HCT116 (cell line): ENCODE measurements at regions of chr1 and their contacts with region 1.

Region 1: DNA sequence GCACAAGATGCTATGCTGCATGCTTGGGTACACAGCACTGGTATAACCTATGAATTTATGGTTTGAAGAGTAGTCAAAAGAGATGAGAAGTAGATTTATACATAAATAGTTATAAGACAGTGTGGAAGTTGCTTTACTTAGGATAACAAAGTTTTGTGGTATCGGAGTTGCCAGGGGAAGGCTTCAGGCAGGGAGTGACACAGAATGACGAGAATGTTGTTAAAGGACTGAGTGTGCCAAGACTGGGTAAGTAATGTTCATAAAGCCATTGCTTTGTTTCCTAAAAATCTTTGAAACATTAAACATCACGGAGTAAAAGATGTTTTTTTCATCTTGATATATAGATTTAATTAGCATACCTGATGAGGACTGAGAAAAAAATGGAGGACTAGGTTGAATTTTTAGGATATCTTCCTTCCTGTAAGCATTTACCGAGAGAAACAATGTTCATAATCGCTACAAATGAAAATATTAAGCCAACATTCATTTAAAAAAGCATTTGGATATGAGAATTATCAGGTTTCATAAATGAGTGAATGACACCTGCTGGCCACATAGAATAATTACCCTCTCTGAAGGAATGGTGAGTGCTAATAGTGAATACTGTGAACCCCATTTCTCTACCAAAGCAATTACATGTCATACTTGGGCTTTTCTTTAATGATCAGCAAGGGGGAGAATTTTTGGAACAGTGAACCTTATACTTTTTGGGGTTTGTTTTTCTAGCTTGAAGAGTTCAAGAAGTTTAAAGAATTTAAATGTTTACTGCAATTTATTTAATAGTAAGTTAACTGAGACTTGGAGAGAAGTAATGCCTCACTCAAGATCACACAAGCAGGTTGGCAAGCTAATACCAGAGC is 28.4 kb downstream of the EXTL2 start:
- DNase-seq: peak; percentile 15
- ATAC-seq: peak; percentile 59; the same call in 1 of the 2 replicates
- H3K4me3 ChIP-seq: no peak overlapping the region
- H3K27ac ChIP-seq: no peak overlapping the region
- H3K4me1 ChIP-seq: peaks cover 0 to 6% of the 10 kb centered on the region in 2 experiments; a peak in 2 of 4 replicates
- H3K27me3 ChIP-seq: no peaks in the 10 kb centered on the region
- CTCF ChIP-seq: peak; percentile 41 to 60 (median 60); a peak in 4 of 6 replicates
- POLR2A ChIP-seq: no peak
- RAD21 ChIP-seq: peak; percentile 68

Region 2: DNA sequence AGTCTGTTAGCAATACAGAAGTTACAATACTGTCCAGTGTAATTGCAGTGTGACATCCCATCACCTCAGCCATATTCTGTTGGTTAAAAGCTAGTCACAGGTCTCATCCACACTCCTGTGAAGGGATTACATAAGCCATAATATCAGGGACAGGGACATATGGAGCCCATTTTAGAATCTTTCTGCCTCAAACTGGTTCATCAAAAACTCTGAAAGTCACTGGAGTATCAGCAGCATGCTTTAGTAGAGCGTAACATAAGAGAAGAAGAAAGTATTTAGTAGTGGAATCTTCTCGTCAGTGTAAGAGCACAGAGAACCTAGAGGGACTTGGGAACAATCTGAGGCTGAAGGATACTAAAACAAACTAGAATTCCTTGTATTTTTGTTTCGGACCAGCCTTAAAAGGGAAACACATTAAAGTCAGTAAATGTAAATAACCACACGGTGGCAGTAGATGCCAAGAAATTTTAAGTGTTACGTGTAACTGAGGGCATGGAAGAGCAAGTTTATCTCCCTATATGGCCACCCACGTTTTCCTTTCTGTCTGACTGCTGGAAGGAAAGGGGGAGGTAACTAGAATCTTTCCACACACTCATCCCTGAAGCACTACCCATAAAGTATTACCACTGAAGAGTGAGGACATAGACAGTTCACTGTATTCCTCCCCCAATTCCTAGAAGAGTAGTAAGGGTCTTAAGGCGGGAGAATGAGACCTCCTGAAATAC is 1057.7 kb before region 1 on chr1:
- CTCF ChIA-PET with region 1: interaction called, 5 read pairs
- POLR2A ChIA-PET with region 1: no interaction called
- RAD21 ChIA-PET with region 1: no interaction called
- intact Hi-C with region 1: loop called (anchors 1 kb)
- DNase-seq: peak; percentile 85
- ATAC-seq: peak; percentile 92
- H3K4me3 ChIP-seq: peak overlapping the region in 1 of 2 experiments; percentile 23; a peak in 1 of 4 replicates
- H3K27ac ChIP-seq: no peak overlapping the region
- H3K4me1 ChIP-seq: peaks cover 0 to 11% of the 10 kb centered on the region in 2 experiments; a peak in 2 of 4 replicates
- H3K27me3 ChIP-seq: no peaks in the 10 kb centered on the region
- CTCF ChIP-seq: peak; percentile 21 to 75 (median 71); a peak in 5 of 6 replicates
- POLR2A ChIP-seq: no peak
- RAD21 ChIP-seq: peak; percentile 95

Region 3: DNA sequence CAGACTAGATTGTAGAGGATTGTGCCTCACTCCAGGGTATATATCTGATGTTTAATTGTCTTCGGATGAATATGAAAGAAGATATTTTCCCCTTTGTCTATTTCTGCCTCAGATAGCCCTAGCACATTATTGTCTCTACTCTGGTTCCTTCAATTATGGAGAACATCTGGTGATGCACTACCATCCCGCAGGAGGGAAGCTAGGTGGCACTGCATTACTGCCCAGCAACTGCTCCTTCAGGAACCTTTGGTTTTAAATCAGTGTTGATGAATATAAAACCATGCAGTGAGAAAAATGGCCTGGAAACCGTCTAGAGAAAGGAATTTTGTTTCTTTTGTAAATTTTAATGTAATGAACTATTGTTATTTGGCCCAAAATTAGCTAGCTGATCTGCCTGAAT is 259.8 kb before region 1 on chr1:
- CTCF ChIA-PET with region 1: interaction called, 13 read pairs
- POLR2A ChIA-PET with region 1: no interaction called
- RAD21 ChIA-PET with region 1: no interaction called
- intact Hi-C with region 1: loop called (anchors 1 kb)
- DNase-seq: peak; percentile 13
- ATAC-seq: peak; percentile 77
- H3K4me3 ChIP-seq: no peak overlapping the region
- H3K27ac ChIP-seq: no peak overlapping the region
- H3K4me1 ChIP-seq: no peaks in the 10 kb centered on the region
- H3K27me3 ChIP-seq: peaks cover 4% of the 10 kb centered on the region
- CTCF ChIP-seq: peak; percentile 51 to 52 (median 51)
- POLR2A ChIP-seq: no peak
- RAD21 ChIP-seq: peak; percentile 71

Region 4: DNA sequence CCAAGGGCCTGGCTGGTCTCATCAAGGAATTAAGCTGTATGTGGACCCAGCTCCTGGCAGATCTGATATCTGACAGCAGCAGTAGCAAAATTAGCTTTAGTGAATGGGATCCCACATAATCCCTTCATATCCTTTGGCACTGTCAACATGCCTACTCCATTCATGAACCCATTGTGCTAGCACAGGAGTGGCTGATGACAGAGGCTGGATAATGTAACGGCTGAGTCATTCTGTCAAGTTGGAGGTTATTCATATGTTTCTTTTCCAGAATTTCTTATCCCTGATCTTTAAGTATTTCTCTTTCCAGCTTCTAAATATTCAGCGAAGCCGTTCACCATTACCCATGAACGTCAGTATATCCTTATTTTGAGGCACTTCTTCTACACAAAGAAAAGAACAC is 55.9 kb before region 1 on chr1:
- CTCF ChIA-PET with region 1: no interaction called
- POLR2A ChIA-PET with region 1: no interaction called
- RAD21 ChIA-PET with region 1: no interaction called
- intact Hi-C with region 1: no loop called
- DNase-seq: no peak
- ATAC-seq: no peak
- H3K4me3 ChIP-seq: no peak overlapping the region
- H3K27ac ChIP-seq: no peak overlapping the region
- H3K4me1 ChIP-seq: no peaks in the 10 kb centered on the region
- H3K27me3 ChIP-seq: no peaks in the 10 kb centered on the region
- CTCF ChIP-seq: no peak
- POLR2A ChIP-seq: no peak
- RAD21 ChIP-seq: no peak

Region 5: DNA sequence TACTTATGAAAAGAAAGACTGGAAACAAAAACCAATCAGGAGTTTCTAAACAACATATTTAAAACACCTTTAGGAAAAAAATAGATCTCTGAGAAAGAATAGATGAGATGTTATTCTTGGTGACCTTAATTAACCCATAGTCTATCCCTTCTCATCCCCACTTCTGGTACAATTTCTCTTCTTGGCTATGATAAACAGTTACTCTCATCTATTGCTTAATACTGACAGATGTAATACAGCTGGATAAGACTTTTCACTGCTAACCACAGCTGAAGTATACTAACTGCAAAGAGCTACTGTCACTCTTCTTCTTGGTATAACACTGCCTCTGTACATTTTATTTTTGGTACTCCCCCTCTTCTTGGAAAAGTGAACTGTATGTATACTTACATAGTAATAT is 13.2 kb after region 1 on chr1:
- CTCF ChIA-PET with region 1: interaction called, 11 read pairs
- POLR2A ChIA-PET with region 1: no interaction called
- RAD21 ChIA-PET with region 1: no interaction called
- intact Hi-C with region 1: no loop called
- DNase-seq: no peak
- ATAC-seq: no peak
- H3K4me3 ChIP-seq: no peak overlapping the region
- H3K27ac ChIP-seq: no peak overlapping the region
- H3K4me1 ChIP-seq: peaks cover 0 to 6% of the 10 kb centered on the region in 2 experiments; a peak in 2 of 4 replicates
- H3K27me3 ChIP-seq: no peaks in the 10 kb centered on the region
- CTCF ChIP-seq: no peak
- POLR2A ChIP-seq: no peak
- RAD21 ChIP-seq: no peak